Lower lobe of right lung (tissue), 2 donors: ENCODE measurements at regions of chr1 and their contacts with region 1.

Region 1: GRCh38 chr1:150931773-150932172 is 5.6 kb downstream of the SETDB1 start:
- DNase-seq: no peak
- ATAC-seq: no peak
- H3K4me3 ChIP-seq: no peak overlapping the region
- H3K27ac ChIP-seq: no peak overlapping the region
- H3K4me1 ChIP-seq: peaks cover 13% of the 10 kb centered on the region
- H3K27me3 ChIP-seq: no peaks in the 10 kb centered on the region
- CTCF ChIP-seq: no peak

Region 2: DNA sequence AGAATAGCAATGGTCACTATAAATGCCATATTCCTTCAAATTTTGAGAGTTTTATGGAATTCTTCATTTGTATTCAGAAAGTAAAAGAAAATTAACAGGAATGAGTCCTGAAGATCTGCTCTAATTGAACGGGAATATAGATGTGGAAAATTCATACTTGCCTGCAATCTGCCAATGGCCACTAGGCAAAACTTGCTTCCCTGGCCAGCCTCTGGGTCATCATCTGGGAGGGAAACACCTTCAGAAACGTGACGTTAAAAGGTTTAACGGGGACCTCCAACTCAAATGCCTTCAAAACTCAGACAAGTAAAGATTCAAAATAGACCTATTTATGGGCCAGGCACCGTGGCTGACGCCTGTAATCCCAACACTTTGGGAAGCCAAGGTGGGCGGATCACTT is 102.0 kb before region 1 on chr1:
- intact Hi-C with region 1: loop called (anchors 10 kb)
- DNase-seq: no peak
- ATAC-seq: no peak
- H3K4me3 ChIP-seq: no peak overlapping the region
- H3K27ac ChIP-seq: no peak overlapping the region
- H3K4me1 ChIP-seq: no peaks in the 10 kb centered on the region
- H3K27me3 ChIP-seq: no peaks in the 10 kb centered on the region
- CTCF ChIP-seq: peak; percentile 17

Region 3: GRCh38 chr1:151106894-151107293 is 175.1 kb after region 1 on chr1:
- intact Hi-C with region 1: no loop called
- DNase-seq: no peak
- ATAC-seq: no peak
- H3K4me3 ChIP-seq: no peak overlapping the region
- H3K27ac ChIP-seq: no peak overlapping the region
- H3K4me1 ChIP-seq: no peaks in the 10 kb centered on the region
- H3K27me3 ChIP-seq: no peaks in the 10 kb centered on the region
- CTCF ChIP-seq: no peak